WTC11 (cell line): ENCODE measurements at regions of chr17 and their contacts with region 1.

Region 1: DNA sequence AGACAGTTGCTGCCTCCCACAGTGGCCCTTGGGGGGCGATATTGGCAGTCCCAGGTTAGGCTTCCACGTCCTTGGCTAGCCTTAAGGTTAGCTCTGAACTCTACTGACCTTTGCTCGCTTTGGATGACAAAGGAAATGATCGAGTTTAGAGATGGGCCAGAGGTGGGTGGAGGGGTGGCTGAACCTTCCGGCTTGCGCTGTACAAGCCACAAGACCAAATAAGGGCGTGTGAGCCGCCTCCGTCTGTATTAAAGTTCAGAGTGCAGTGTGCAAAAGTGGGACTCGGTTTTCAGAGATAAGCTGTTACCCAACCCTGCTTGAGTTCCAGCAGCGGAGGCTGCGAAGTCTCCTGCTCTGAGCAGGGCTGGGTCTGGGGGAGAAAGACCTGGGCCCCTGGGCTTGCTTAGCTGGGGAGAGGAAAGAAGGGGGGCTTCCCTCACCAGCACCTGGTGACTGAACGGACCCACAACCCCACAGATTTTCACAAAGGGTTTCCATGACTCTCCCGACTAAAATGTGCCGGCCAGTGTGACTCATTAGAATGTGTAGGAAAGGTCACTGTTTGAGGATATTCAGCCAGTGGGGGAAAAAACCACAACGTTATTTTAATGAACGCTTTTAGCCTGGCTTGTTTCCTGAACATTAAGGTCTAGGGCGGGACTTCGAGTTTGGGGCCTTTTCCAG is 67.2 kb downstream of the CENPV start:
- DNase-seq: peak; percentile 81
- ATAC-seq: peak; percentile 99
- H3K4me3 Mint-ChIP-seq: peak overlapping the region; percentile 47
- H3K27ac Mint-ChIP-seq: no peak overlapping the region
- H3K4me1 Mint-ChIP-seq: peaks cover 18% of the 10 kb centered on the region
- H3K27me3 Mint-ChIP-seq: peaks cover 18% of the 10 kb centered on the region
- CTCF ChIP-seq: peak; percentile 56

Region 2: GRCh38 chr17:16178836-16179235 is 107.3 kb before region 1 on chr17:
- CTCF ChIA-PET with region 1: no interaction called
- POLR2A ChIA-PET with region 1: no interaction called
- DNase-seq: no peak
- ATAC-seq: no peak
- H3K4me3 Mint-ChIP-seq: no peak overlapping the region
- H3K27ac Mint-ChIP-seq: no peak overlapping the region
- H3K4me1 Mint-ChIP-seq: peaks cover 8% of the 10 kb centered on the region; the same call in 1 of the 2 replicates
- H3K27me3 Mint-ChIP-seq: no peaks in the 10 kb centered on the region
- CTCF ChIP-seq: no peak

Region 3: DNA sequence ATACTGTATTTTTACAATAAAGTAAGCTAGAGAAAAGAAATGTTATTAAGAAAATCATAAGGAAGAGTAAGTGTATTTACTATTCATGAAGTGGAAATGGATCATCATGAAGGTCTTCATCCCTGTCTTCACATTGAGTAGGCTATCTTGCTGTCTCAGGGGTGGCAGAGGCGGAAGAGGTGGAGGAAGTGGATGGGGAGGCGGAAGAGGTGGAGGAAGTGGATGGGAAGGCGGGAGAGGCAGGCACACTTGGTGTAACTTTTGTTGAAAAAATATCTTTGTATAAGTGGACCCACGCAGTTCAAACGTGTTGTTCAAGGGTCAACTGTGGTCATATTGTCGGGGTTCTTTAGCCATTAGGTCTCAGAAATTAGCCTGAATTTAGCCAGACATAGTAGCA is 18.9 kb before region 1 on chr17:
- CTCF ChIA-PET with region 1: interaction called, 4 read pairs
- POLR2A ChIA-PET with region 1: interaction called, 10 read pairs
- DNase-seq: no peak
- ATAC-seq: no peak
- H3K4me3 Mint-ChIP-seq: no peak overlapping the region
- H3K27ac Mint-ChIP-seq: no peak overlapping the region
- H3K4me1 Mint-ChIP-seq: no peaks in the 10 kb centered on the region
- H3K27me3 Mint-ChIP-seq: no peaks in the 10 kb centered on the region
- CTCF ChIP-seq: no peak

Region 4: DNA sequence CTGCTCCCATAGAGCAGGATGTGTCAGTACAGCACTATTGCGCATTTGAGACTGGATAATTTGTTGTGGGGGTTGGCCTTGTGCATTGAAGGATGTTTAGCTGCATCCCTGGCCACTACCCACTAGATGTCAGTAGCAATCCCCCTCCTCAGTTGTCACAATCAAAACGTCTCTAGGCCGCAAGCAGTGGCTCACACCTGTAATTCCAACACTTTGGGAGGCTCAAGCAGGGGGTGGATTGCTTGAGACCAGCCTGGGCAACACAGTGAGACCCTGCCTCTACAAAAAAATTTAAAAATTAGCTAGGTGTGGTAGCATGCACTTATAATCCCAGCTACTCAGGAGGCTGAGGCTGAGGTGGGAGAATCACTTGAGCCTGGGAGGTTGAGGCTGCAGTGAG is 18.7 kb after region 1 on chr17:
- CTCF ChIA-PET with region 1: interaction called, 14 read pairs
- POLR2A ChIA-PET with region 1: no interaction called
- DNase-seq: peak; percentile 26
- ATAC-seq: peak; percentile 88
- H3K4me3 Mint-ChIP-seq: no peak overlapping the region
- H3K27ac Mint-ChIP-seq: no peak overlapping the region
- H3K4me1 Mint-ChIP-seq: no peaks in the 10 kb centered on the region
- H3K27me3 Mint-ChIP-seq: no peaks in the 10 kb centered on the region
- CTCF ChIP-seq: no peak